PC-9 (cell line): ENCODE measurements at regions of chr20 and their contacts with region 1.

Region 1: GRCh38 chr20:5222919-5223634 is 93.7 kb downstream of the PROKR2 start:
- DNase-seq: peak; percentile 53 to 58
- H3K4me3 ChIP-seq: no peak overlapping the region
- H3K27ac ChIP-seq: no peak overlapping the region
- H3K4me1 ChIP-seq: no peaks in the 10 kb centered on the region
- H3K27me3 ChIP-seq: peaks cover 8% of the 10 kb centered on the region
- CTCF ChIP-seq: peak; percentile 86

Region 2: GRCh38 chr20:4607287-4607713 is 615.8 kb before region 1 on chr20:
- CTCF ChIA-PET with region 1: no interaction called
- POLR2A ChIA-PET with region 1: no interaction called
- intact Hi-C with region 1: loop called (anchors 1 kb)
- DNase-seq: peak; percentile 49 to 57
- H3K4me3 ChIP-seq: no peak overlapping the region
- H3K27ac ChIP-seq: no peak overlapping the region
- H3K4me1 ChIP-seq: peaks cover 7% of the 10 kb centered on the region
- H3K27me3 ChIP-seq: no peaks in the 10 kb centered on the region
- CTCF ChIP-seq: peak; percentile 97

Region 3: DNA sequence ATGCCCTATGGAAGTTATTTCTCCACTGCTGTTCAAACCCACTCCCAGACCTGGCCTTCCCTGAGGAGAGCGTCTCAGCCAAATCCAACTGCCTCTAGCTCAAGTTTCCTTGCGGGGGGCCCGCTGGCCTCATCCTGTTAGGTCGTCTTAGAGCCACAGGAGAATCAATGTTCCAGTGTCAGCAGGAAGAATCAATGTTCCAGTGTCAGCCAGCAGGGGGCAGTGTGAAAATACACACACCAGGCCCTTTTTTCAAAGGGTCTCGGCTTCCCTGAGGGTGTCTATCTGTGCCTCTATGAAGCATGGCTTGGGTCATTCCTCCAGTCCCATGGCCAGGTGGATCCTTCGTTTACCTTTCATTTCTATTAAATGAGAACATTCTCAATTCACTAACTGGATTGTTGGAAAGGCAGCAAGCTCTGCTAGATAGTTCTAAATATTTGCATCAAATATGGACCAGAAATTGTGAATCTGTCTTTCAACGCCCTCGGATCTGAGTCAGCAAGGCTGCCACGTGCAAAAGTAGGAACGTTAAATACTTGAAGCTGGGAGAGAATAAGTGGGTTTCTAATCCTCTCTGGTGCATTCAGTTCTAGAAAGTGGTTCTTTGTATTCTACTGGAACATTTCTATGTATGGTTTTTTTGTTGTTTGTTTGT is 482.2 kb before region 1 on chr20:
- CTCF ChIA-PET with region 1: no interaction called
- POLR2A ChIA-PET with region 1: no interaction called
- intact Hi-C with region 1: loop called (anchors 10 kb)
- DNase-seq: peak in 1 of 2 experiments; percentile 40
- H3K4me3 ChIP-seq: no peak overlapping the region
- H3K27ac ChIP-seq: no peak overlapping the region
- H3K4me1 ChIP-seq: no peaks in the 10 kb centered on the region
- H3K27me3 ChIP-seq: no peaks in the 10 kb centered on the region
- CTCF ChIP-seq: peak; percentile 90

Region 4: GRCh38 chr20:4916971-4917881 is 305.9 kb before region 1 on chr20:
- CTCF ChIA-PET with region 1: no interaction called
- POLR2A ChIA-PET with region 1: interaction called, 11 read pairs
- intact Hi-C with region 1: no loop called
- DNase-seq: peak; percentile 50 to 82
- H3K4me3 ChIP-seq: no peak overlapping the region
- H3K27ac ChIP-seq: no peak overlapping the region
- H3K4me1 ChIP-seq: peaks cover 14% of the 10 kb centered on the region
- H3K27me3 ChIP-seq: no peaks in the 10 kb centered on the region
- CTCF ChIP-seq: no peak

Region 5: DNA sequence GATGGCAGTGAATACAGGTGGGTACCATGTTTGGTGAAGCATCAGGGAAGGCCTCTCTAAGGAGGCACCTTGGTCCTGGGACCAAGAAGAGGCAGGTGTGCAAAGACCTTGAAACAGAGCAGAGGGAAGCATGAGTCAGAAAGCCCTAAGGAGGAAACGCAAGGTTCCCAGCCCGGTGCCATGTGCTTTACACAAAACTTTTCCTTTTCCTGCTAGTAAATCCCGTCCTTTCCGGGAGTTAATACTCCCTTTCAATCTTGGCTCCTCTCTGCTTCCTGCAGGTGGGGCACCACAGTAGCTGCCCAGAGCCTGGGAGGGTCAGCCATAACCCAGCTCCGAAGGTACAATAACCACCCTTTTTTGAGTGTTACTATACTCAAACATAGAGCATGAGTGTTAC is 202.3 kb before region 1 on chr20:
- CTCF ChIA-PET with region 1: no interaction called
- POLR2A ChIA-PET with region 1: no interaction called
- intact Hi-C with region 1: no loop called
- DNase-seq: no peak
- H3K4me3 ChIP-seq: no peak overlapping the region
- H3K27ac ChIP-seq: no peak overlapping the region
- H3K4me1 ChIP-seq: no peaks in the 10 kb centered on the region; the same call in 1 of the 2 replicates
- H3K27me3 ChIP-seq: no peaks in the 10 kb centered on the region
- CTCF ChIP-seq: no peak